ENCODE measurements at regions of chr1 and their contacts with region 1.

Region 1: GRCh38 chr1:64223329-64224151 is 20.1 kb downstream of the UBE2U start:
- DNase-seq: no peak
- H3K4me3 Mint-ChIP-seq: no peak overlapping the region
- H3K27ac Mint-ChIP-seq: peak overlapping the region; percentile 30
- H3K4me1 Mint-ChIP-seq: peaks cover 11% of the 10 kb centered on the region
- H3K27me3 Mint-ChIP-seq: peaks cover 31% of the 10 kb centered on the region

Region 2: GRCh38 chr1:64171797-64172281 is 51.7 kb before region 1 on chr1:
- intact Hi-C with region 1: loop called (anchors 1 kb)
- DNase-seq: no peak
- H3K4me3 Mint-ChIP-seq: no peak overlapping the region
- H3K27ac Mint-ChIP-seq: no peak overlapping the region
- H3K4me1 Mint-ChIP-seq: peaks cover 14% of the 10 kb centered on the region
- H3K27me3 Mint-ChIP-seq: peaks cover 3% of the 10 kb centered on the region

Measured in activated T-helper 1 cell treated with anti-CD3 and anti-CD28 coated beads, Interleukin-12 subunit alpha, Interleukin-12 subunit beta, Interleukin-2, Interleukin-4 antibody, amounts not matched to agents 30 ng/mL and 10 ng/mL and 1 ng/mL, durations not matched to agents 14 hours and 24 hours and 36 hours (primary cell).